ENCODE measurements at regions of chr4 and their contacts with region 1.

Region 1: DNA sequence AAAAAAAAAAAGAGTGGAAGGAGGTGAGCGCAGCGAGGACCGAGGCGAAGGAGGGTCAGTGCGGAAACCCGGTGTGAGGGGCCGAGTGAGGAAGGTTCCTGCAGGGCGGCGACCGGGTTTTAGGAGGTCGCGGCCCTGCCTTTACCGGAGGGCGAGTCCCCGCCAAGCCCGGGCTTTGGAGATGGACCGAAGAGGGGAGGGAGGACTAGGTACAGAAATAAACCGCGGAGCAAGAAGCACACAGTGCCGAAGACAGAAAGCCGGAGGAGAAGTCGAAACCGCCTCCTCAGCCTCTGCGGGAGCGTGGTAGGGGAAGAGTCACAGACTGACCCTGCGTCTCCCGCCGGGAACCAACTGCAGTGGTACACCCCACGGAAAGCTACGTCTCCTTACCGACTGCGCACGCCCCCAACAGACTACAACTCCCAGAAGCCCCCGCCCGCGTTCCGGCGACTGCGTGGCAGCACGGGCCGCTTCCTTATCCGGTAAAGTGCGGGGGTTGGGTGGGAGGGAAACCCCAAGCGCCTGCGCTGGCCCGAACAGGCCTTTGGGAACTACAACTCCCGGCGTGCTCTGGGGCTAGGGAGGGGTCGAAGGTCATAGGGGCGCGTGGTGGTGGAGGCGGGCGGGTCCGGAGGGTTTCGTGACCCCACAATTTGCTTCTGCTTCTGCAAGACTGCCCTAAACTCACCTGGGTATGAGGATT is at the start of gene NFXL1:
- DNase-seq: peak; percentile 97 to 99 (median 99)
- ATAC-seq: peak; percentile 99 to 100 (median 100)
- H3K4me3 ChIP-seq: peak within 1 kb of the TSS; percentile 43 to 96 (median 88)
- H3K27ac ChIP-seq: peak within 1 kb of the TSS in 11 of 12 donors; percentile 46 to 85 (median 81)
- H3K4me1 ChIP-seq: peaks cover 0 to 26% (median 12%) of the 10 kb centered on the region in 12 donors
- H3K27me3 ChIP-seq: no peaks in the 10 kb centered on the region
- CTCF ChIP-seq: no peak
- POLR2A ChIP-seq: peak in 1 of 2 donors; percentile 87
- total RNA-seq, gene NFXL1: 4.0 to 7.3 (median 5.4) TPM

Region 2: DNA sequence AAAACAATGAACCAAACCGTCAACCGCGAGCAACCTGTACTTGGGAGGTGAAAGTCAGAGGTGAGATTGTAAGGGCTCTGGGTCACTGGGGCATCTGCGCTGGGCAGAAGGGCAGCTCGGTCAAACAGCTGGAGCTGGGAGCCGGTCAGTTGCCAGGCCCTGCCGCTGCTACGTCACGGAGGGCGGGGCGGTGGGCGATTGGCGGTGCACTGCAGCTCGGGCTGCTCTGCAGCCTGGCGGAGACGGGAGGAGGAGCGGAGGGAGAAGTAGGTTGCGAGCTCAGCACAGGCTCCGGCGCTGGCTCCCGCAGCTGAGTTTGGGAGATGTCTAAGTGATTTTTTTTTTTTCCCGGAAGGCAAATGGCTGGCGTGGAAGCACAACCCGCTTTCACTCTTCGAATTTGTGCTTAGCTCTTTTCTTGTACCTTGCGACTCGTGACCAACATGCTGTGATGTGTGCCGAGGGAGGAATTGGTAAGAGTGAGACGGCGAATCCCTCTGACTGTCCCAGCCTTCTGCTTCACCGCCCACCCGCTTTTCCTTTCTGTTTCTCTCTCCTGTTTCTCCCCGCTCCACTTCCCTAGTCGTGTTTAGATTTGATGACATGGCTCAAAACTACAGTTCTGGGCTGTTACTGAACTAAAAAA is 429.2 kb before region 1 on chr4 and contains the start of gene ATP10D:
- intact Hi-C with region 1: loop called in 3 of 10 experiments (anchors 10 kb)
- DNase-seq: peak; percentile 96 to 98 (median 98)
- ATAC-seq: peak; percentile 99 to 100 (median 100)
- H3K4me3 ChIP-seq: peak within 1 kb of the TSS; percentile 40 to 76 (median 68)
- H3K27ac ChIP-seq: peak within 1 kb of the TSS; percentile 62 to 94 (median 92)
- H3K4me1 ChIP-seq: peaks cover 0 to 38% (median 12%) of the 10 kb centered on the region in 12 donors
- H3K27me3 ChIP-seq: no peaks in the 10 kb centered on the region
- CTCF ChIP-seq: peak in 4 of 12 donors; percentile 24 to 50 (median 38)
- POLR2A ChIP-seq: peak in 1 of 2 donors; percentile 90
- total RNA-seq, gene ATP10D: 5.4 to 22.1 (median 8.1) TPM

Region 3: DNA sequence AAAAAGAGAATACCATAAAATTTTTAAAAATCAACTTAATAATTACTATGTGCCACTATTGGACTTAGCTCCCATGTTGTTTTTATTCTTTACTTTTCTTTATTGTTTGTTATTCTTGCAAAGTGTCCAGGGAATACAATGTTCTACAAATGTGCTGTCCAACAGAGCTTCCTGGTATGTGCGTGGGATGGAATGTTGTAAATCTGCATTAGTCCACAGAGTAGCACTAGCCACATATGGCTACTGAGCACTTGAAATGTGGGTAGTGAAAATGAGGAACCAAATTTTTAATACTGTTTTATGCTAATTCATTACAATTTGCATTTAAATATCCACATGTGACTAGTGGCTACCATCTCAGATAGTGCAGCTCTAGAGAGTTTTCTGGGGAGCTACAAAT is 62.2 kb before region 1 on chr4:
- intact Hi-C with region 1: loop called in 1 of 10 experiments (anchors 5 kb)
- DNase-seq: no peak
- ATAC-seq: peak in 3 of 4 donors; percentile 56 to 77 (median 65)
- H3K4me3 ChIP-seq: no peak overlapping the region
- H3K27ac ChIP-seq: no peak overlapping the region
- H3K4me1 ChIP-seq: peaks cover 0 to 17% (median 0%) of the 10 kb centered on the region in 12 donors
- H3K27me3 ChIP-seq: no peaks in the 10 kb centered on the region
- CTCF ChIP-seq: no peak
- POLR2A ChIP-seq: no peak